ENCODE measurements at regions of chr4 and their contacts with region 1.

Region 1: DNA sequence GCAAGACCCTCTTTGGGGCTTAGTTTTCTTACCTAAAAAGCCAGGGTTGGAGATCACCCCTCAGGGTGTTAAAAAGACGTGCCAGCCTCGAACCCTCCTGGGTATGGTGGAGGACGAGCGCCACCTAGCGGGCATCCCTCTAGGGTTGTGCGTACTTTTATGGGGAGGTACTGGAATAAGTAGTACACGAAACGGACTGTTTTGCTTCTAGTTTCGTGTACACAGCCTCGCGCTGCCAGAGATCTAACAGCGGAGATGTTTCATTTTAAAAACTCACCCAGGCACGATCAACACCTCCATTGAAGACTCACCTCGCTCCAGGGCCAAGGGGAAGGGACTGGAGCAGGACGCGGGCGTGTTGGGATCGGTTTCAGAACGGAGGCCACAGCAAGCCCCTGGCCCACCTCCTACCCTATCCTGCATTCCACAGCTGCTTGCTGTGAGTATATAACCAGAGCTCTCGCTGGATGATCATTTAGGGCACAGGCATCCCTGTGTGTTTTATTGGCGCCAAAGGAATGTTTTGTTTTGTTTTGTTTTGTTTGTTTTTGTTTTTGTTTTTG is 4.8 kb upstream of the NKX3-2 start:
- DNase-seq: peak; percentile 70 to 85 (median 78)
- ATAC-seq: peak; percentile 51
- H3K4me3 ChIP-seq: no peak overlapping the region
- H3K27ac ChIP-seq: no peak overlapping the region
- H3K4me1 ChIP-seq: peaks cover 34% of the 10 kb centered on the region
- H3K27me3 ChIP-seq: peaks cover 3 to 48% of the 10 kb centered on the region in 2 donors
- CTCF ChIP-seq: peak; percentile 59 to 83 (median 77)
- POLR2A ChIP-seq: no peak

Region 2: GRCh38 chr4:12734586-12734985 is 814.5 kb before region 1 on chr4:
- intact Hi-C with region 1: loop called (anchors 10 kb)
- DNase-seq: no peak
- ATAC-seq: no peak
- H3K4me3 ChIP-seq: no peak overlapping the region
- H3K27ac ChIP-seq: no peak overlapping the region
- H3K4me1 ChIP-seq: no peaks in the 10 kb centered on the region
- H3K27me3 ChIP-seq: no peaks in the 10 kb centered on the region
- CTCF ChIP-seq: no peak
- POLR2A ChIP-seq: no peak

Region 3: DNA sequence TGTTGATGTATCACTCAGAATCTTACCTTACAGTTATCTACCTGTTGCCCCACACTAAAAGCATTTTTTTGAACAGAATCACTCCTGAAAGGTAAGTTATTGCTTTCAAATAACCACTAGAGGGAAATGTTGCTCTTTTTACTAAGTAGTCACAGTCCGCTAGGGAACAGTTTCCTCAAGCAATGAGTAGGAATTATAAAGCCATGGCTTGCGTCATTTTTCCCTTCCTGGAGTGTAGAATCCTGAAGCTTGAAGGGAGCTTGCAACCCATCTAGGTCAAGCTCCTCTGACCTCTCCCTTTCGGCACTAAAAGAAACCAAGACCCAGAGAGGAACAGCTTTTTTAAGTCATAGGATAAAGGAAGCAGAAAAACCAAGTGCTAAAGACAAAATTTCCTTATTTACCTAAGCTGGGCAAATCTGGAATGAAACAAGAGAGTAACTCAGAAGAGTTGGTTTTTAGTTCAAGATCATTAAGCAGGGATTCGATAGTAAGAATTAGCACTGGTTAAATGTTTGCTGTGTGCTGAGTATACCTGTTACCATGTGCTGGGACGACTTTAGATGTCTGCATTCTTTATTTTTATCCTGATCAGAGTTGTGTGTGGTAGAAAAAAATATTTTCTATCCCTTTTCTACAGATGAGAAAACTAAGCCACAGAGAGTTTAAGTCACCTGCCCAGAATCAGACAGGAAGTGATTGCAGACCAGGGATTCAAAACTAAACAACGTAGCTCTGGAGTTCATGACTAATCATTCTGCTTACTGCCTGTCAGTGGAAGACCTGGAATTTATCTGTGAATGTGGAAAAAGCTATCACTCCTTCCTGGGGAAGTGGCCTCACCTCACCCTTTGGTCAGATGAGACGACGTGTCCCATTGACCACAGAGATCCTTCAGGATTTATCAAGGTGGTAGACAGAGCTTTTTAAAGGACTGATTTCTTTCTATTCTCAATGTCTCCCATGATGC is 696.4 kb before region 1 on chr4:
- intact Hi-C with region 1: loop called (anchors 5 kb)
- DNase-seq: peak in 2 of 4 donors; percentile 12 to 46
- ATAC-seq: peak; percentile 86
- H3K4me3 ChIP-seq: no peak overlapping the region
- H3K27ac ChIP-seq: no peak overlapping the region
- H3K4me1 ChIP-seq: no peaks in the 10 kb centered on the region
- H3K27me3 ChIP-seq: no peaks in the 10 kb centered on the region
- CTCF ChIP-seq: peak; percentile 21 to 80 (median 71)
- POLR2A ChIP-seq: no peak

Region 4: DNA sequence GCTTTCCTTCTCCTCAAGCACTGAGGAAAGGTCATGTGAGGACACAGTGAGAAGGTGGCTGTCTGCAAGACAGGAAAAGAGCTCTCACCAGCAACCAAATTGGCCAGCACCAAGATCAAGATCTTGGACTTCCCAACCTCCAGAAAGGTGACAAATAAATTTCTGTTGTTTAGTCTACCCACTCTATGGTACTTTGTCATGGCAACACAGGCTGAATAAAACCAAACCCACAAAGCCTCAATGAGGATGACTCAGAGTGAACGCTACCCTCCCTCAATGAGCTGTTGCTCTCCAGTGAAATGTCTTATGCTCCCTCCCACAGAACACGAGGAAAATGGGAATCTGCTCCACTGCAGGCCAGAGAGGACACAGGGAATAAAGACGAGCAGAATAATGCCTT is 309.0 kb before region 1 on chr4:
- intact Hi-C with region 1: no loop called
- DNase-seq: no peak
- ATAC-seq: no peak
- H3K4me3 ChIP-seq: no peak overlapping the region
- H3K27ac ChIP-seq: no peak overlapping the region
- H3K4me1 ChIP-seq: no peaks in the 10 kb centered on the region
- H3K27me3 ChIP-seq: no peaks in the 10 kb centered on the region
- CTCF ChIP-seq: no peak
- POLR2A ChIP-seq: no peak

Region 5: GRCh38 chr4:13298655-13299054 is 250.4 kb before region 1 on chr4:
- intact Hi-C with region 1: no loop called
- DNase-seq: peak in 1 of 4 donors; percentile 9
- ATAC-seq: no peak
- H3K4me3 ChIP-seq: no peak overlapping the region
- H3K27ac ChIP-seq: no peak overlapping the region
- H3K4me1 ChIP-seq: no peaks in the 10 kb centered on the region
- H3K27me3 ChIP-seq: no peaks in the 10 kb centered on the region
- CTCF ChIP-seq: no peak
- POLR2A ChIP-seq: no peak

Region 6: DNA sequence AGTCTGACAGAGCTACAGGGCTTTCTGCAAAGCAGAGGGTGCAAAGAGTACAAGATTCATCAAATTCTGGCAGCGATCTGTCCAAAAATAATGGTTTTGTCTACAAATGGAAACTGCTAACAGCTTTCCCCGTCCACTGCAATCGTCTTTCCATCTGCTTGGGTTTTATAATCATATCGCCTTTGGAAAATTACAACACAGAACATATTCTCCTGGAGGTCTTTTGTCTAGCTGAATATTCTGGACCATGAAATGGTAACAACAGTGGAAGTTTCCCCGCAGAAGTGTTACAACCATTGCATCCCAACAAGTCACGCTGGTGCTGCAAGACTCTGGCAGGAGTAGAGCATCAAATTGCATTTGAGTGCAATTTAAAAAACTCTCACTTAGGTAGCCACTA is 179.7 kb after region 1 on chr4:
- intact Hi-C with region 1: no loop called
- DNase-seq: no peak
- ATAC-seq: no peak
- H3K4me3 ChIP-seq: no peak overlapping the region
- H3K27ac ChIP-seq: no peak overlapping the region
- H3K4me1 ChIP-seq: no peaks in the 10 kb centered on the region
- H3K27me3 ChIP-seq: no peaks in the 10 kb centered on the region
- CTCF ChIP-seq: no peak
- POLR2A ChIP-seq: no peak

Measured in body of pancreas (tissue), 4 donors.